Endothelial cell of umbilical vein (primary cell): ENCODE measurements at regions of chr4 and their contacts with region 1.

Region 1: DNA sequence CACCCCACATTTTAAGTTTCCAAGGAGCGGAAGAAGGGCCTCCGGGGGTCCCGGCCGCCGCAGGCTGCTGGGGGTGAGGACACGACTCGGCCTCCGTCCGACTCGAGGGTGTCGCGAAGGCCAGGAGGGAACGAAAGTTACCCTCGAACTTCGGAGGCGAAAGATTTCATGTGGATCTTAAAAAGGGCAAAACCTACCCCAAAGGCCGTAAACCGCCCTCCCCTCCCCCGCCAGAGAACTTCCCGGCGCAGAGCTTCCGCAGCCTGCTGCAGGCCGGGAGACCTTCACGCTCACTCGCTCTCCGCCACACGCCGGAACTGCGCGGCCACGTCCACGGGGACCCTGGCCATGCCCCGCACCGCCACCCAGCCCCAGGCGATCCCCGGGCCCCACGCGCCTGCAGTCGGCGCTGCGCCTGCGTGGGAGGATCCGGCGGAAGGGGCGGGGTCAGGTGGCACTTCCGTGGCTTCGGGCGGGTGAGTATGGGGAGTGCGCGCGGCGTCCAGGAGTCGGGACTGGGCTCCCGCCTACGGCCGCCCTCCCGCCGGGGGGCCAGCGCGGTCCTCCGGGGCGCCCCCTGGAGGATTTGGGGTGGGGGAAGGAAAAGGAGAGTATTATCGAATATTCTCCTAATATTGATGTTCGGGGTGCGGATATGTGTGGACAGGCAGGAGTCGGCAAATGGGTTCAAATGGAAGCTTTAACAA is at the start of gene MMAA:
- DNase-seq: peak; percentile 89
- H3K4me3 ChIP-seq: peak within 1 kb of the TSS; percentile 87 to 98 (median 91)
- H3K27ac ChIP-seq: peak within 1 kb of the TSS; percentile 98
- H3K4me1 ChIP-seq: peaks cover 21% of the 10 kb centered on the region
- H3K27me3 ChIP-seq: no peaks in the 10 kb centered on the region
- CTCF ChIP-seq: peak; percentile 65 to 72
- POLR2A ChIP-seq: peak; percentile 85
- total RNA-seq, gene MMAA: 5.1 and 5.6 TPM in 2 replicates

Region 2: GRCh38 chr4:144174401-144175067 is 1444.6 kb before region 1 on chr4:
- CTCF ChIA-PET with region 1: no interaction called
- POLR2A ChIA-PET with region 1: no interaction called
- dilution Hi-C with region 1: no loop called
- intact Hi-C with region 1: loop called (anchors 5 kb)
- DNase-seq: peak; percentile 77
- H3K4me3 ChIP-seq: no peak overlapping the region
- H3K27ac ChIP-seq: no peak overlapping the region
- H3K4me1 ChIP-seq: peaks cover 15% of the 10 kb centered on the region
- H3K27me3 ChIP-seq: no peaks in the 10 kb centered on the region
- CTCF ChIP-seq: peak; percentile 8 to 12
- POLR2A ChIP-seq: no peak

Region 3: GRCh38 chr4:145180298-145181090 is 438.6 kb before region 1 on chr4 and contains the start of gene OTUD4:
- CTCF ChIA-PET with region 1: interaction called, 11 read pairs
- POLR2A ChIA-PET with region 1: no interaction called
- dilution Hi-C with region 1: no loop called
- intact Hi-C with region 1: loop called (anchors 1 kb)
- DNase-seq: peak; percentile 96
- H3K4me3 ChIP-seq: peak within 1 kb of the TSS; percentile 78 to 93 (median 92)
- H3K27ac ChIP-seq: peak within 1 kb of the TSS; percentile 78
- H3K4me1 ChIP-seq: peaks cover 18% of the 10 kb centered on the region
- H3K27me3 ChIP-seq: no peaks in the 10 kb centered on the region
- CTCF ChIP-seq: peak in 1 of 2 donors; percentile 25
- POLR2A ChIP-seq: no peak
- total RNA-seq, gene OTUD4: 39.5 and 40.9 TPM in 2 replicates

Region 4: DNA sequence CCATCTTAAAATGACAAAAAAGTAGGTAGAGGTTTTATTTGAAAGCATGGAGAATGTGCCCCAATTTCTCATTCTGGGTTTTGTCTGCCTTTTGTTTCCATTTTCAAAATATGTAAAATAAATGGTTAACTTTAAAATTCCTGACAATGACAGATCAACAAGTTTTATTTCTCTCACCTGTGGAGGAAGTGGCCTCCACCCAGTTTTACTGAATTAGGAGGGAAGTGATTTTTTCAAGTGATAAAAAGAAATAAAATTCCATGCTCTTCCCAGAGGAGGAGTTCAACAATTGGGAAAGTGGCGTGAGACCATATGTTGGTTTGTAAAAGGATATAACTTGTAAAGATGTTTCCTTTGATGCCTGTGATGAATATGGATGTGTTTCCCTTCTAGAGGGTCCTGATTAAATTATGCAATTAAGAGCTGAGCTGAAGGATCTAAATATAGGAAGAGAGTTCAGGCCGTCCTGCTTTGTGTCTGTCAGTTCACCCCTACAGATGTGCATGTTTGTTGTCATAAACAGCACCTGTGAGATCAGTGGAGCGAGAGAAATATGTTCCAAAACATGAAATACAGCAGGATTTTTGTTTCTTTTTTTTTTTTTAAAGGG is 117.9 kb before region 1 on chr4:
- CTCF ChIA-PET with region 1: no interaction called
- POLR2A ChIA-PET with region 1: no interaction called
- dilution Hi-C with region 1: no loop called
- intact Hi-C with region 1: loop called (anchors 5 kb)
- DNase-seq: peak; percentile 91
- H3K4me3 ChIP-seq: no peak overlapping the region
- H3K27ac ChIP-seq: peak overlapping the region; percentile 27
- H3K4me1 ChIP-seq: peaks cover 54% of the 10 kb centered on the region
- H3K27me3 ChIP-seq: no peaks in the 10 kb centered on the region
- CTCF ChIP-seq: no peak
- POLR2A ChIP-seq: no peak

Region 5: GRCh38 chr4:145732895-145733880 is 114.1 kb after region 1 on chr4:
- CTCF ChIA-PET with region 1: interaction called, 5 read pairs
- POLR2A ChIA-PET with region 1: no interaction called
- dilution Hi-C with region 1: no loop called
- intact Hi-C with region 1: loop called (anchors 1 kb)
- DNase-seq: peak; percentile 97
- H3K4me3 ChIP-seq: peak overlapping the region; percentile 38 to 69 (median 51)
- H3K27ac ChIP-seq: peak overlapping the region; percentile 94
- H3K4me1 ChIP-seq: peaks cover 42% of the 10 kb centered on the region
- H3K27me3 ChIP-seq: no peaks in the 10 kb centered on the region
- CTCF ChIP-seq: no peak
- POLR2A ChIP-seq: peak; percentile 73

Region 6: GRCh38 chr4:145887241-145887991 is 268.3 kb after region 1 on chr4:
- CTCF ChIA-PET with region 1: interaction called, 3 read pairs
- POLR2A ChIA-PET with region 1: no interaction called
- dilution Hi-C with region 1: no loop called
- intact Hi-C with region 1: loop called (anchors 5 kb)
- DNase-seq: peak; percentile 45
- H3K4me3 ChIP-seq: no peak overlapping the region
- H3K27ac ChIP-seq: no peak overlapping the region
- H3K4me1 ChIP-seq: no peaks in the 10 kb centered on the region
- H3K27me3 ChIP-seq: no peaks in the 10 kb centered on the region
- CTCF ChIP-seq: no peak
- POLR2A ChIP-seq: no peak

Region 7: GRCh38 chr4:146175541-146176453 is 556.7 kb after region 1 on chr4 and contains the start of gene LSM6:
- CTCF ChIA-PET with region 1: no interaction called
- POLR2A ChIA-PET with region 1: no interaction called
- dilution Hi-C with region 1: no loop called
- intact Hi-C with region 1: loop called (anchors 10 kb)
- DNase-seq: peak; percentile 86
- H3K4me3 ChIP-seq: peak within 1 kb of the TSS; percentile 63 to 80 (median 72)
- H3K27ac ChIP-seq: peak within 1 kb of the TSS; percentile 65
- H3K4me1 ChIP-seq: peaks cover 10% of the 10 kb centered on the region
- H3K27me3 ChIP-seq: no peaks in the 10 kb centered on the region
- CTCF ChIP-seq: peak in 1 of 2 donors; percentile 1
- POLR2A ChIP-seq: peak; percentile 53
- total RNA-seq, gene LSM6: 34.7 and 43.1 TPM in 2 replicates